IMR-90 (cell line): ENCODE measurements at regions of chr20 and their contacts with region 1.

Region 1: DNA sequence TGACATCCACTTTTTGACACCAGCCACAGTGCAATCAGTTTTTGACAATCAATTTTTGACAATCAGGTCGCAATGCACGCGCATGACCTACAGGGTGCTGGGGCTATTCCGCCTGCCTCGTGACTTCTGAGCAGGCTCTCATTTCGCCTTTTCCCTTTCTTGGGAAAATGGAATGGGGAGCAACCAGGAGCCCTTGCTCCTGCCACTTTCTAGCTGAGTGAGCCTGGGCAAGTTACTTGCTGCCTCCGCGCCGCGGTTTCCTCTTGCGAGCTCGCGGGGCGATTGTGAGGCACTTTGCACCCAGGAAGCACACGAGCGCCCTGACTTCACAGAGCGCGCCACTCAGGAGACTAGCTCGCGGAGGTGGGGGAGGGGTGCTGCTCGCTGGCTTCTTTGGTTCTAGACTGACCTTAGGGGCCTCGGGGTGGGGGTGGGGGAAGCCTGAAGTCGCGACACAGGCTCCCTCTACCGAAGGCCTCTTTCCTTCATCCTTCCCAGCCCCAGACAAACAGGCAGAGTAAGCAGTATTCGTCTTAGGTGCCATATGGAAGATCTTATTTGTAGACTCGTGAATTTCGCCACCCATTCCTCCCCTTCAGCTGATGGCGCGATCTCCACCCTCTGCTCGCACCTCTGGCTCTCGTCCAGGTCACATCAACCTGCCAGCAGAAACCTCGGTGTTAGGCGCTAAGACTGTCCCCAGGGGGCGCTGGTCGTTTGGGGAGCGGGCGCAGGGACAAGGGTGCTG is 4.6 kb downstream of the TP53TG5 start:
- DNase-seq: peak; percentile 66
- ATAC-seq: peak; percentile 89
- H3K4me3 ChIP-seq: peak overlapping the region; percentile 37
- H3K27ac ChIP-seq: no peak overlapping the region
- H3K4me1 ChIP-seq: no peaks in the 10 kb centered on the region; the same call in 1 of the 2 replicates
- H3K27me3 ChIP-seq: no peaks in the 10 kb centered on the region
- CTCF ChIP-seq: peak; percentile 80
- POLR2A ChIP-seq: no peak
- RAD21 ChIP-seq: peak; percentile 75

Region 2: DNA sequence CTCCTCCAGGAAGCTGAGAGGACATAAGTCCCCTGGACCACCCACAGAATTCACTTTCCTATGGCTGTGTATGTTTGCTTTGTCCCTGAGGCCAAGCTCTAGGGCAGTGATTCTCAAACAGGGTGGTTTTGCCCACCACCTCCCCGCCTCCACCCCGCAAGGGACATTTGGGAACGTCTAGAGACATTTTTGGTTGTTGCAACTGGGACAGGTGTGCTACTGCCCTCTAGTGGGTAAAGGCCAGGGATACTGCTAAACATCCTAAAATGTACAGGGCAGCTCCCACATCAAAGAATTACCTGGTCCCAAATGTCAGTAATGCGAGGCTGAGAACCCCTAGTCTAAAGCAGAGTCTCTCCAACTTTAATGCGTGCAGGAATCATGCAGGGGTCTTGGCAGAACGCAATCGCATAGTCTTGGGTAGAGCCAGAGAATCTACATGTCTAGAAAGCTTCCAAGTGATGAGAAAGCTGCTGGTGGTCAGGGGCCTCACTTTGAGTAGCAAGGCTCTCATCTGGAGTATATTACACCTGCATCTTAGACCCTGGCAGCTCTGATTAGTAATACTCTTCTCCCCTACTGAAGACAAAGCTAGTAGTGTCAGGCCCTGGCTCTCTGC is 277.7 kb before region 1 on chr20:
- CTCF ChIA-PET with region 1: no interaction called
- POLR2A ChIA-PET with region 1: no interaction called
- dilution Hi-C with region 1: no loop called
- in situ Hi-C with region 1: no loop called
- intact Hi-C with region 1: no loop called
- DNase-seq: peak; percentile 69
- ATAC-seq: peak; percentile 84
- H3K4me3 ChIP-seq: no peak overlapping the region
- H3K27ac ChIP-seq: no peak overlapping the region
- H3K4me1 ChIP-seq: peaks cover 4% of the 10 kb centered on the region; the same call in 1 of the 2 replicates
- H3K27me3 ChIP-seq: peaks cover 37% of the 10 kb centered on the region
- CTCF ChIP-seq: peak; percentile 79
- POLR2A ChIP-seq: no peak
- RAD21 ChIP-seq: peak; percentile 79

Region 3: GRCh38 chr20:45415774-45416637 is 42.5 kb after region 1 on chr20 and contains the start of gene PIGT:
- CTCF ChIA-PET with region 1: no interaction called
- POLR2A ChIA-PET with region 1: no interaction called
- dilution Hi-C with region 1: no loop called
- in situ Hi-C with region 1: loop called (anchors 5 kb)
- intact Hi-C with region 1: no loop called
- DNase-seq: peak; percentile 72
- ATAC-seq: peak; percentile 97
- H3K4me3 ChIP-seq: peak within 1 kb of the TSS; percentile 90
- H3K27ac ChIP-seq: peak within 1 kb of the TSS; percentile 90
- H3K4me1 ChIP-seq: peaks cover 9% of the 10 kb centered on the region; the same call in 1 of the 2 replicates
- H3K27me3 ChIP-seq: no peaks in the 10 kb centered on the region
- CTCF ChIP-seq: 0 out of 2 replicates have a peak, but pooled peaks have one; percentile 0
- POLR2A ChIP-seq: peak; percentile 91
- RAD21 ChIP-seq: peak; percentile 18; the same call in 1 of the 2 replicates
- total RNA-seq, gene PIGT: 27.2 and 31.2 TPM in 2 replicates

Region 4: GRCh38 chr20:45436732-45437391 is 63.3 kb after region 1 on chr20:
- CTCF ChIA-PET with region 1: interaction called, 38 read pairs
- POLR2A ChIA-PET with region 1: no interaction called
- dilution Hi-C with region 1: no loop called
- in situ Hi-C with region 1: no loop called
- intact Hi-C with region 1: loop called (anchors 1 kb)
- DNase-seq: peak; percentile 81
- ATAC-seq: peak; percentile 100
- H3K4me3 ChIP-seq: peak overlapping the region; percentile 75
- H3K27ac ChIP-seq: peak overlapping the region; percentile 42
- H3K4me1 ChIP-seq: no peaks in the 10 kb centered on the region
- H3K27me3 ChIP-seq: peaks cover 3% of the 10 kb centered on the region
- CTCF ChIP-seq: peak; percentile 91
- POLR2A ChIP-seq: 0 out of 2 replicates have a peak, but pooled peaks have one; percentile 37
- RAD21 ChIP-seq: peak; percentile 91